Activated CD4-positive, alpha-beta T cell treated with anti-CD3 and anti-CD28 coated beads for 36 hours (primary cell): ENCODE measurements at regions of chr9 and their contacts with region 1.

Region 1: DNA sequence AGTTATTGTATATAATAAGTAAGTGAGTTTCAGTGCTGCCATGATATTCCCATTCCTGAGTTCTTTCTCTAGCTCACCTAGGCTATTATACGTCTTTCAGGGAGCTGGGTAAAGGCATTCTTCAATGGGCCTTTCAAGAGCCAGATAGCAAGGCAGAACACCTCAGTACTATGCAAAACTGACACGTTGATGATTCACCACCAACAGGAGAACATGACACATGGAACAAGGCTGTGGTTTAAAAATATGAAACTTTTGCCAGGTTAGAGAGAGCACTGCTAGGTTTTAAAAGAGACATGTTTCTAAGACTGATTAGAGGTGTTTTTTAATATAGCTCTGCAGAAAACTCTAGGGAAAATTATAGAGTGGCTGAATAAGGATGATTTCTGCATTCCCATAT is 95.9 kb downstream of the UGCG start:
- DNase-seq: peak; percentile 62
- ATAC-seq: peak; percentile 92
- H3K4me3 Mint-ChIP-seq: no peak overlapping the region
- H3K27ac Mint-ChIP-seq: no peak overlapping the region
- H3K4me1 Mint-ChIP-seq: peaks cover 34% of the 10 kb centered on the region
- H3K27me3 Mint-ChIP-seq: peaks cover 2% of the 10 kb centered on the region

Region 2: DNA sequence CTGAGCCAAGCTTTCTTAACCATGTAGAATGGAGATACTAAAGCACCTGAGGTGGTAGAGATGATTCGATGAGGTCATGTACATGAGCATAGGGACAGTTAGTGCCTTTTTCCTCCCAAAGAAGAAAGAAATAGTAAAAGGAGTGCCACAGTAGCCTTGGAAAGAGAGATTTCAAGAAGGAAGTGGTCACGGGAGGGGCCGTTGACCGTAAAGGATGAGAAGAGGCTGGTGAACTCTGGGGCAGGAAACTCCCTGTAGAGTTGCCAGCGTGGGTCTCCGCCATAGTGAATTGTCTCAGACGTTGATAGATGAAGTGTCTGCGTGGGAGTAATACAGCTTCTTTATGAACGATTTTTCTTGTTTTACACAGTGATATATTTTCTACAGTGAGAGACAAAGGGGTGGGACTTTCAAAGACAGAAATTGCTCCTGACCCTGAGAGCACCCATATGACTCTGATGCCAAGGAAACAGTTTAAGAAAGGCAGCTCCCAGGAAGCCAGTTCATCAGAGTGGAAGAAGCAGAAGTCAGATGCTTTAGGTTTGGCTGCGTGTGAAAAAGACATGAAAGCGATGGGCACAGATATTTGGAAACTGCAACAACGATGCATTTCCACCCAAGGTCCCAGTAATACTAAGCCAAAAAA is 54.6 kb before region 1 on chr9:
- CTCF ChIA-PET with region 1: interaction called, 4 read pairs
- POLR2A ChIA-PET with region 1: no interaction called
- intact Hi-C with region 1: loop called (anchors 1 to 2 kb)
- DNase-seq: peak; percentile 83
- ATAC-seq: peak; percentile 92
- H3K4me3 Mint-ChIP-seq: peak overlapping the region; percentile 44
- H3K27ac Mint-ChIP-seq: peak overlapping the region; percentile 86
- H3K4me1 Mint-ChIP-seq: peaks cover 23% of the 10 kb centered on the region
- H3K27me3 Mint-ChIP-seq: no peaks in the 10 kb centered on the region

Region 3: DNA sequence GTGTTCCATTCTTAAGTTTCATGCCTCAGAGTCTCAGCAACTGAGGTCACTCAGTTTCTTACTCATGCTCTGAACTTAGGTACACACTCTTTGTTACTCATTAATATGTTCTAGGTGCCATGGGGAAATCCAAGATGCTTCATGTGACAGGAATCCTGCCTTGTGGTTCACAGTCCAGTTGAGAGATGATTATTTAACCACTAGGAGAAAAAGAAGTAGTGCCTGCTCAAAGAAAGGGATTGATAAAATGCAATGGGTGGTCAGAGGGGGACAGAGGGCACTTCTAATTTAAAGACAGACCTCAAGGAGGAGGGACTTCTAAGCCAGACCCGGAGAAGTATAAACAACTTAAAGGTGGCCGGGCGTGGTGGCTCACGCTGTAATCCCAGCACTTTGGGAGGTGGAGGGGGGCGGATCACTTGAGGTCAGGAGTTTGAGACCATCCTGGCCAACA is 26.9 kb before region 1 on chr9:
- CTCF ChIA-PET with region 1: interaction called, 5 read pairs
- POLR2A ChIA-PET with region 1: no interaction called
- intact Hi-C with region 1: loop called (anchors 1 to 2 kb)
- DNase-seq: peak; percentile 34
- ATAC-seq: peak; percentile 95
- H3K4me3 Mint-ChIP-seq: no peak overlapping the region
- H3K27ac Mint-ChIP-seq: no peak overlapping the region
- H3K4me1 Mint-ChIP-seq: peaks cover 15% of the 10 kb centered on the region
- H3K27me3 Mint-ChIP-seq: peaks cover 4% of the 10 kb centered on the region

Region 4: DNA sequence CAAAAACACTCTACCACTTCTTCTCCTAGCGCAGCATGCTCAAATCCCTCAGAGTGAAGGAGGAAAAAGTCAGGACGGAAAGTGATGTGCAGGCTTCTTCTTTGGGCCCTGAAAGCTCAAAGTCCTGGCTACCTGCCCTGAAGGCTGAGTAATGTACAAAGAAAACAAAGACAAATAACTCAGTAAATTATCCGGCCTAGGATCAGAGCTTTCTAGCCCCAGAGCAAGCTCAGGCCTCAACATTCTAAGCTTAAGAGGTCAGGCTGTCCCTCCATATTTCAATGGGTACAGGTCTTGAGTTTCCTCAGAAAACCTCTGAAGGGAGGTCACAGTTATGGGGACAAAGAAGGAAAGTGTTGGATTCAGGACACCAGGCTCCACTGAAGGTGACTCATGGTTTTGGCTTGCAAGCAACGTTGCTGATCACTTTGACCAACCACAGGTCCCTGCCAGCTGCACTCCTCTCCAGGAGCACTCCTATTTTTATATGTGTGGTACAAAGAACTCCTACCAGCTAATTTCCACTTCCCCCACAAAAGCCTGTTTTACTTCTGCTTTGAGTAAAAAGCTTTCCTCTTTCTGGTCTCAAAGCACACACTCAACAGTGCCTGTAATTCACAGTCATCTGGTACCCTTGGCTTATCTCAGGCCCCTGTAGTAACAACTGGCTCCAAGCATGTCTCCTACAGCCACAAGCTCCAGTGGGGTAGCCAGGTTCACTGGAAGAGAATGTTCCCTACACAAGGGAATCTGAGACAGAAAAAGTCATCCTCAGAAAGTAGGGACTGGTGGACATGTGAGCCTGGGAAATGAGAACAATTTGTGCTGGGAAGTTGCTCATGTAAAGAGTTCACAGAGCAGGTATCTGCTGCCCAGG is 19.7 kb after region 1 on chr9:
- CTCF ChIA-PET with region 1: interaction called, 5 read pairs
- POLR2A ChIA-PET with region 1: no interaction called
- intact Hi-C with region 1: loop called (anchors 1 kb)
- DNase-seq: peak; percentile 43
- ATAC-seq: peak; percentile 97
- H3K4me3 Mint-ChIP-seq: no peak overlapping the region
- H3K27ac Mint-ChIP-seq: peak overlapping the region; percentile 27
- H3K4me1 Mint-ChIP-seq: peaks cover 34% of the 10 kb centered on the region
- H3K27me3 Mint-ChIP-seq: peaks cover 17% of the 10 kb centered on the region

Region 5: GRCh38 chr9:112028280-112029221 is 36.0 kb after region 1 on chr9:
- CTCF ChIA-PET with region 1: no interaction called
- POLR2A ChIA-PET with region 1: interaction called, 3 read pairs
- intact Hi-C with region 1: loop called in 1 of 2 experiments (anchors 1 kb)
- DNase-seq: peak; percentile 53
- ATAC-seq: peak; percentile 78
- H3K4me3 Mint-ChIP-seq: no peak overlapping the region
- H3K27ac Mint-ChIP-seq: peak overlapping the region; percentile 1
- H3K4me1 Mint-ChIP-seq: peaks cover 45% of the 10 kb centered on the region
- H3K27me3 Mint-ChIP-seq: peaks cover 5% of the 10 kb centered on the region

Region 6: DNA sequence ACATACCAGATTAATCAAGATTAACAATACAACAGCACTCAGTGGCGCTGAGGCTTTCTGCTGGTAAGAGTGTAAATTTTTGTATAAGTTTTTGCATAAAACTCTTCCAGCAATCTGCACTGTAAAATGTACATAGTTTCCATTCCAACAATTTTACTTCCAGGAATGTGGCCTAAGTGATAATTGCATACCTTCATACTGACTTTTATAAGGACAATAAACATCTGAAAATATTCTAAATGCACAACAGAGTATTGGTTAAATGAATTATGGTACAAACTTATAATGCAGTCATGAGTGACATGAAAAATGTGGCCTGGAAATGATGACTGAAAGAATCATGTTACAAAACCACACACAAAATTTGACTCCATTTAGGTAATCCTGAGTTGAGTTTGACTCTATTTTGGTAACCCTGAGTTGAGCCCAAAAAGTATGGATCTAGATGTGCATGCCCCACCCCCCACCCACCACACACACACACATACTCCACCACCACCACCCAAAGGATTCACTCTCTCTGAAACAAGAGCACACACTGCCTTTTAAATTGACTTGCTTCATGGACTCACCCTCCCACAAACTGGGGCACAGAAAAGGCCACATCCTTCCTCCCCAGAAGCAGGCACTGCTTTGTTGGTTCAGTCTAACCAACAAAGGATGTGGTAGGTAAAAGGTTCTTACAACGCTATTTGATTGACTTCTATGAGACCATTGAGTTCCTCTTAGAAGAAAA is 44.9 kb after region 1 on chr9:
- CTCF ChIA-PET with region 1: no interaction called
- POLR2A ChIA-PET with region 1: no interaction called
- intact Hi-C with region 1: loop called (anchors 1 kb)
- DNase-seq: peak; percentile 82
- ATAC-seq: peak; percentile 95
- H3K4me3 Mint-ChIP-seq: no peak overlapping the region
- H3K27ac Mint-ChIP-seq: peak overlapping the region; percentile 74
- H3K4me1 Mint-ChIP-seq: peaks cover 64% of the 10 kb centered on the region
- H3K27me3 Mint-ChIP-seq: peaks cover 11% of the 10 kb centered on the region

Region 7: DNA sequence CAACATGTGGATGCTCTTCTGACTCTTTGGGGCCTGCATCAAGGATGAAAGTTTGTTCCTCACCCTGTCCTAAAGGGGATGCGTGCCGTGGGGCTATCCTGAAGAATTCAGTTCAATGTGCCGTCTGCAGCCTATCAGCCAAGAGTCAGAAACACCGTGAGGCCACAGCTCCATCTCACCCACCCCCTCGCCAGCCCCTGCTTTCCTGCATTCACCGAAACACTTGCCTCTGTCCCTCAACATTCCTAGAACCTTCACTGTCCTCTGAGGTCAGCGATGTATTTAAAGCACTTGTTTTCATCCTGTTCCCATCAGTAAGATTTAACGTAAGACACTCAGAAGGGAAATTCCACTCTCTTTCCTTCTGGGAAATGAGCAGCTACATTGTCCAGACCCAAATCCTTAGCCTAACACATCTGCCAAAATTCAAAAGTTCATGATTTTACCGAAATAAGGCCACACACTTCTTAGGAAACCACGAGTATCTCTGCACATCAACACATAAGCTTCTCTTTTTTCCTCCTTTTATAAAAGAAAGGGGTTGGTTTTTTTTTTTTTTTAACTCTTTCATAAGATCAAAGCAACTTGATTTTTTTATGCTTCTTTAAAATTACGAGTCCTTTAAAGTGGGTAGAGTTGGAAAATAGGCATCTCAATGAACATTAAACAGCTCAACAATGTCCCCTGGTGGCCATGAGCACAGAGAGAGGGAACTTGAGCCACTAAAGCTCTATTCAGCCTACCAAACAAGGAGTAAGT is 81.9 kb after region 1 on chr9:
- CTCF ChIA-PET with region 1: interaction called, 8 read pairs
- POLR2A ChIA-PET with region 1: no interaction called
- intact Hi-C with region 1: loop called in 1 of 2 experiments (anchors 5 kb)
- DNase-seq: peak; percentile 81
- ATAC-seq: peak; percentile 85
- H3K4me3 Mint-ChIP-seq: no peak overlapping the region
- H3K27ac Mint-ChIP-seq: peak overlapping the region; percentile 72
- H3K4me1 Mint-ChIP-seq: peaks cover 35% of the 10 kb centered on the region
- H3K27me3 Mint-ChIP-seq: peaks cover 4% of the 10 kb centered on the region